OCI-LY7 (cell line): ENCODE measurements at regions of chr10 and their contacts with region 1.

Region 1: GRCh38 chr10:73096449-73097304 is at the start of gene P4HA1:
- DNase-seq: peak; percentile 96
- H3K4me3 ChIP-seq: peak within 1 kb of the TSS; percentile 87
- H3K27ac ChIP-seq: peak within 1 kb of the TSS; percentile 73
- H3K4me1 ChIP-seq: peaks cover 22% of the 10 kb centered on the region
- CTCF ChIP-seq: peak; percentile 71
- total RNA-seq, gene P4HA1: 11.6 and 17.9 TPM in 2 replicates

Region 2: GRCh38 chr10:73079779-73080541 is 16.7 kb before region 1 on chr10:
- CTCF ChIA-PET with region 1: no interaction called
- POLR2A ChIA-PET with region 1: interaction called, 11 read pairs
- intact Hi-C with region 1: no loop called
- DNase-seq: no peak
- H3K4me3 ChIP-seq: no peak overlapping the region
- H3K27ac ChIP-seq: no peak overlapping the region
- H3K4me1 ChIP-seq: peaks cover 10% of the 10 kb centered on the region
- CTCF ChIP-seq: no peak

Region 3: GRCh38 chr10:73131301-73131700 is 34.6 kb after region 1 on chr10:
- CTCF ChIA-PET with region 1: no interaction called
- POLR2A ChIA-PET with region 1: no interaction called
- intact Hi-C with region 1: no loop called
- DNase-seq: no peak
- H3K4me3 ChIP-seq: no peak overlapping the region
- H3K27ac ChIP-seq: no peak overlapping the region
- H3K4me1 ChIP-seq: no peaks in the 10 kb centered on the region
- CTCF ChIP-seq: no peak

Region 4: GRCh38 chr10:73159038-73159648 is 62.5 kb after region 1 on chr10:
- CTCF ChIA-PET with region 1: interaction called, 3 read pairs
- POLR2A ChIA-PET with region 1: interaction called, 7 read pairs
- intact Hi-C with region 1: loop called (anchors 2 kb)
- DNase-seq: peak; percentile 64
- H3K4me3 ChIP-seq: no peak overlapping the region
- H3K27ac ChIP-seq: no peak overlapping the region
- H3K4me1 ChIP-seq: no peaks in the 10 kb centered on the region
- CTCF ChIP-seq: peak; percentile 96

Region 5: GRCh38 chr10:73167783-73168464 is 71.2 kb after region 1 on chr10 and contains the starts of genes ECD and FAM149B1:
- CTCF ChIA-PET with region 1: no interaction called
- POLR2A ChIA-PET with region 1: interaction called, 23 read pairs
- intact Hi-C with region 1: no loop called
- DNase-seq: peak; percentile 94
- H3K4me3 ChIP-seq: peak within 1 kb of the TSS; percentile 86
- H3K27ac ChIP-seq: peak within 1 kb of the TSS; percentile 51
- H3K4me1 ChIP-seq: peaks cover 5% of the 10 kb centered on the region
- CTCF ChIP-seq: peak; percentile 35; the same call in 1 of the 2 replicates
- total RNA-seq, gene ECD: 24.6 and 27.3 TPM in 2 replicates
- total RNA-seq, gene FAM149B1: 8.0 and 14.7 TPM in 2 replicates

Region 6: DNA sequence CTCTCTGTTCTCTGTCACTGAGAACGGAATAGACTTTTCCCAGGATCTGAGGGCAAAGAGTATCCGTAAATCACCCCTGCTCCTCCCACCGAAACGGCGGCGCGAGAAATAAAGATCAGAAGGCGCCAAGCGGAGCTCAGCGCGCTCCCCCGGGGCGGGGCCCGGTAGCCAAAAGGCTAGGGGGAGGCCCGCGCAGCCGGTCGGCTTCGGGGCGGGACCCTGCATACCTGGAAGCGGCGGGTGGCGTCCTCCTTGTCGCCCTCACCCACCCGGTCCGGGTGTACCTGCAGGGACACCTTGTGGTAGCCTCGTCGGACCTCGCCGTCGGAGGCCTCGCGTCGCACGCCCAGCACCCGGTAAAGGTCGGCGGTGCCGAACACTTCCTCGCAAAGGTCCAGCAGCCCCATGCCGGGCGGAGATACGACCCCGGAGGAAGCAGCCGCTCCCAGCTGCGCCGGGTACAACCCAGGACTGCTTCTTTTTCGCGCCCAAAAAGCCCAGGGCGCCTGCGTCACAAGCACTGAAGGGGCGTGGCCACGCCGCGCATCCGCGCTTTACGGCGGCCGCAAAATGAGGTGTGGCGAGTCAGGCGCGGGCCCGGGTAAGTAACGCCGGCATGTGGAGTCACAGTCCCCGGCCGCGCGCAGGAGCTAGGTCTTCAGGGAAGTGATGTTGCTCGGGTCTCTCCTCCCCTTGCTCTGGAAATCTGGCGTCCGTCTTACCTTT is 150.3 kb after region 1 on chr10 and contains the start of gene DNAJC9:
- CTCF ChIA-PET with region 1: no interaction called
- POLR2A ChIA-PET with region 1: interaction called, 10 read pairs
- intact Hi-C with region 1: loop called (anchors 5 kb)
- DNase-seq: peak; percentile 98
- H3K4me3 ChIP-seq: peak within 1 kb of the TSS; percentile 94
- H3K27ac ChIP-seq: peak within 1 kb of the TSS; percentile 91
- H3K4me1 ChIP-seq: peaks cover 58% of the 10 kb centered on the region
- CTCF ChIP-seq: no peak
- total RNA-seq, gene DNAJC9: 83.3 and 94.2 TPM in 2 replicates

Region 7: DNA sequence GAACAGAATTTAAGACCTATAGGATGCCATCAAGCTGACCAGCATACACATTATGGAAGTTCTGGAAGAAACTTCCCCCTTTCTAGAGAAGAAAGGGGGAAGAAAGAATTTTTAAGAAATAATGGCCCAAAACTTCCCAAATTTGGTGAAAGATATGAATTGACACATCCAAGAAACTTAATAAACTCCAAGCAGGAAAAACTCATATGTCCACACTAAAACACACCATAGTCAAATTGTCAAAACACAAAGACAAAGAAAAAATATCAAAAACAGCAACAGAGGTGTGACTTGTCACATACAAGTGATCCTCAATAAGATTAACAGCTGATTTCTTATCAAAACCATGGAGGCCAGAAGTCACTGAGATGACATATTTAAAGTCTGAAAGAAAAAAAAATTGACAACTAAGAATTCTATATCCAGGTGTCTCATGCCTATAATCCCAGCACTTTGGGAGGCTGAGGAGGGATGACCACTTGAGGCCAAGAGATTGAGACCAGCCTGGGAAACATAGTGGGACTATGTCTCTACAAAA is 209.6 kb after region 1 on chr10:
- CTCF ChIA-PET with region 1: no interaction called
- POLR2A ChIA-PET with region 1: no interaction called
- intact Hi-C with region 1: no loop called
- DNase-seq: no peak
- H3K4me3 ChIP-seq: no peak overlapping the region
- H3K27ac ChIP-seq: no peak overlapping the region
- H3K4me1 ChIP-seq: no peaks in the 10 kb centered on the region
- CTCF ChIP-seq: no peak

Region 8: DNA sequence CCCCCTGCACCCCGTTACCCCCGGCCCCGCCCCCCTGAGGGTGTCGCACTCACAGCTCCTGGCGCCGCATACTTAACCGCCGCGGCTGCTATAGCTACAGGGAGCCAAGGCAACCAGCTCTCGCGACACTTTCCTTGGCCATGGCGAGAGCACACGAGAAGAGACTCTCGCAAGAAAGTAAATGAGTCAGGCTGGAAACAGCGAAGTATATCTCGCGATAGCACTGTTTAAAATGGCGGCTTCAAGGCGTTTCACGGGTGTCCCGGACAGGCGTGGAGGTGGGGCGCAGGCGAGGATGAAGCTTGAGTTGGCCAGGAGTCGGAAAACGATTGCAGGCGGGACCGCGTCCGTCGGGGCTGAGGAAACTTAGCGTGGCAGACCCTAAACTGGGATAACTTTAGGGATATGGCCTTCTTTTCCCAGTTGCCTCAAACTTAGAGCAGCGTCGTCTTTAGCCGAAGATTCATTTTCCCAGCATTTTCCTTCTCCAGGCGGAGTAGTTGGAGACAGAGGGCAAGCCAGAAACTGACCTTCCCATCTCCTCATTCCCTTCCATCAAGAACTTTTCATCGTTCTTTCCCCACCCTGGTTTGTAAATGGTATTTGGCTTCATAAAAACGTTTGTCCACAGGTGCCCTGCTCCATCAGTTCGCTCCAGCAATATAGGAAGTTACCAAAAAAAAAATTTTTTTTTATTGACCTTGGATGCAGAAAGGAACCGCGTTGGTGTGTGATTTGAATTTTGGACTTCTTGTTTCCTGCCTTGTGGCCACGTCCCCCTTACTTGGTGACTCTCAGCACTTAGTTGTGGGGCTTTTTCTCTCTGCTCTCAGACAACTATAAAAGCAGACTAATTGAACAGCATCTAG is 529.4 kb after region 1 on chr10:
- CTCF ChIA-PET with region 1: no interaction called
- POLR2A ChIA-PET with region 1: interaction called, 9 read pairs
- intact Hi-C with region 1: loop called (anchors 2 kb)
- DNase-seq: peak; percentile 98
- H3K4me3 ChIP-seq: peak overlapping the region; percentile 76
- H3K27ac ChIP-seq: peak overlapping the region; percentile 28
- H3K4me1 ChIP-seq: peaks cover 17% of the 10 kb centered on the region
- CTCF ChIP-seq: no peak